Left cardiac atrium (tissue), 4 donors: ENCODE measurements at regions of chr4 and their contacts with region 1.

Region 1: GRCh38 chr4:9898596-9899305 is 117.3 kb downstream of the DRD5 start:
- DNase-seq: peak; percentile 77
- ATAC-seq: peak; percentile 89 to 90

Region 2: GRCh38 chr4:9832640-9833308 is 66.0 kb before region 1 on chr4:
- intact Hi-C with region 1: loop called in 1 of 2 experiments (anchors 10 kb)
- DNase-seq: peak; percentile 33
- ATAC-seq: peak; percentile 75 to 84

Region 3: DNA sequence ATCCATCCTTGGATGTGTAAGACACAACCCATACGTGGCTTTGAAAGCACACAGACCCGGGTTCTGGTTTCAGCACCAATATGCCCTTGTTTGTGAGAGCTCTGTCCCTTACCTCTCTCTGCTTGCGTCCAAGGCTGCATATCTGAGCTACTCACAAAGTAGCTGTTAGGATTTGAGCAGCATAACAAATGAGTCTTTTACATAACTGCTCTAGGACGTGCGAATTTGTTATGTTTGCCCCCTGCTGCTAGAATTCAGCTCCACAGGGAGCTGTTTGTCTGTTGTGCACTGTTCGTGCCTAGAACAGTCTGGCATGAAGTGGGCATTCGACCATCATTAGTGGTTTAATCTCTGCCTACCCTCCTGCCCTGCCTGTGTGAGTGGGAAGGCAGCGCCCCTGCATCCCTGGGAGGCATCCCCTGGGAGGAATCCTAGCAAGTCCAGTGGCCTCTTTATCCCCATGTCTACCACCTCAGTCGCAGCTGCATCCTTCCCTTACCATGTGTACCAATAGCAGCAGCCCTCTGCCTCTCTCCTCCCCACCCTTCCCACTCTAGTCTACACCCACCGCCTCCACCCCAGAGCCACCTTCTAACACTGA is 80.5 kb after region 1 on chr4:
- intact Hi-C with region 1: no loop called
- DNase-seq: no peak
- ATAC-seq: no peak

Region 4: GRCh38 chr4:10013722-10014121 is 115.0 kb after region 1 on chr4:
- intact Hi-C with region 1: loop called in 1 of 2 experiments (anchors 5 kb)
- DNase-seq: peak; percentile 51
- ATAC-seq: peak in 1 of 2 donors; percentile 38